ENCODE measurements at regions of chr20 and their contacts with region 1.

Region 1: DNA sequence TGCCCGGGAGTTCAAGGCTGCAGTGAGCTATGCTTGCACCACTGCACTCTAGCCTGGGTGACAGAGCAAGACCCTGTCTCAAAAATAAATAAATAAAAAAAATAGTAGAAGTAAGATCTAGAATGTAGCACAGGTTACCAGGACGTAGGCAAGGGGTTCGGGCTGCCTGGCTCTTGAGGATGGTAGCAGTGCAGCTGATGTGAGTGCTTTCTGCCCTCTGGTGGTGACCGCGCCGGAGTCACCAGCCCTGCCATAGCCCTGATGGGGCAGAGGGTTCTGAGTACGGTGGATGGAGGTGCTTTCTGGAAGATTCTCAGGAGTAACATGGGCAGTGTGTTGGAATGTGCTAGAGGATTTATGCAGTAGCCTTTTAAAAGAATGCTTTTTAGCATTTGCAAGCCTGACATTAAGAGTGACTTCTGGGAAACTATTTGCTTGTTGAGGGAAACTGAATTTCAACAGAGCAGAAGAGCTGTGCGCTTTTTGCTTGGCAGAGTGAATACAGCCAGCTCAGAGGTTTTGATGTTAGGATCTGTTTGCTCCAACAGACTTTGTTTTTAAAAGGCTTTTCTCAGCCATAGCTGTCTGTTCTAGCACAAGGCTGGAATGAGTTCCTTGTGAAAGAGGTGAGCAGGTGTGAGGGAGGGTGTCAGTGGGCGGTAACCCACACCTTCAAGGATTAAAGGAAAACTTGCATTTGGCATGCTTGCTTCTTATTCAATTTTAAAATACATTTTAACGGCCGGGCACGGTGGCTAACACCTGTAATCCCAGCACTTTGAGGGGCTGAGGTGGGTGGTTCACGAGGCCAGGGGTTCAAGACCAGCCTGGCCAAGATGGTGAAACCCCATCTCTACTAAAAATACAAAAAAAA is 65.9 kb downstream of the PTPN1 start:
- DNase-seq: no peak
- H3K4me3 ChIP-seq: no peak overlapping the region
- H3K27me3 ChIP-seq: no peaks in the 10 kb centered on the region
- CTCF ChIP-seq: peak; percentile 89

Region 2: DNA sequence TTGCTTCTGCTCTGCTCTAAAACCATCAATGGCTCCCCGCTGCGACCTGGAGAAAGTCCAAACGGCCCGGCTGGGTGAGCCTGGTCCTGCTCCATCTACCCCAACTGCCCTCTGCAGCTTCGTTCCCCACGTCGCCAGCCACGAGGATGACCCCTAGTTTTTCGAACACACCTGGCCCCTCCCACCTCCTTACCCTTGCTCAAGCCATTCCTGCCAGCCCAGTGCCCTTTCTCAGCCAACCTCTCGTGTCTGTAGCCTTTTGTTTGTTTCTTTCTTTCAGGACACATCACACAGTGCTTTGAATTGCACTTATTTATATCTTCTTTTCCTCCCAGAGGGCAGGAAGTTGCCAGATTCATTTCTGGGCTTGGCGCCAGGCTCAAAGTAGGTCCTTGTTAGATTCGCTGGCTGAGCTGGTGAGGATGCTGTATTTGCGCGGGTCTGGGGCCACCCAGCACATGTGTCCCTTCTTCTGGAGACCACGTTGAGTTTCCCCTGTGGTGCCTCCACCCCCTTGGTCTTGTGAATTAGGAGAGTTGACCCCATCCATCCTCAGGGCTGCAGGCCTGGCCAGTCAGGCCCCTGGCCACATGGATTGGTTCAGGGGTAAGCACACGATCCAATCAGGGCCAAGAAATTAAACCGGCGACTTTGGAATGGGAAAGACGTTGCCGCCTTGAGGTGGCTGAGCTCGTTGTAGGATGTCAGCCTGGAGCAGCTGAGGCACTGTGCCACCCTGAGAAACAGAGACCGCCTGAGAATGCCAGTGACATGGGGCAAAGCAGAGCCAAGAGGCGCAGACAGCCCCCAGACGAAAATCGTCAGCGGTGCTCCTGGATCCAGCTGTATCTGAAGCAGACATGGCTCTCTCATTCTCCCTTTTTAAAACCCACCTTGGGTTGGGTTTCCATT is 229.5 kb before region 1 on chr20:
- CTCF ChIA-PET with region 1: no interaction called
- POLR2A ChIA-PET with region 1: no interaction called
- DNase-seq: no peak
- H3K4me3 ChIP-seq: no peak overlapping the region
- H3K27me3 ChIP-seq: no peaks in the 10 kb centered on the region
- CTCF ChIP-seq: no peak

Region 3: GRCh38 chr20:50460460-50461267 is 115.4 kb before region 1 on chr20:
- CTCF ChIA-PET with region 1: interaction called, 83 read pairs
- POLR2A ChIA-PET with region 1: no interaction called
- DNase-seq: no peak
- H3K4me3 ChIP-seq: no peak overlapping the region
- H3K27me3 ChIP-seq: no peaks in the 10 kb centered on the region
- CTCF ChIP-seq: peak; percentile 95

Region 4: DNA sequence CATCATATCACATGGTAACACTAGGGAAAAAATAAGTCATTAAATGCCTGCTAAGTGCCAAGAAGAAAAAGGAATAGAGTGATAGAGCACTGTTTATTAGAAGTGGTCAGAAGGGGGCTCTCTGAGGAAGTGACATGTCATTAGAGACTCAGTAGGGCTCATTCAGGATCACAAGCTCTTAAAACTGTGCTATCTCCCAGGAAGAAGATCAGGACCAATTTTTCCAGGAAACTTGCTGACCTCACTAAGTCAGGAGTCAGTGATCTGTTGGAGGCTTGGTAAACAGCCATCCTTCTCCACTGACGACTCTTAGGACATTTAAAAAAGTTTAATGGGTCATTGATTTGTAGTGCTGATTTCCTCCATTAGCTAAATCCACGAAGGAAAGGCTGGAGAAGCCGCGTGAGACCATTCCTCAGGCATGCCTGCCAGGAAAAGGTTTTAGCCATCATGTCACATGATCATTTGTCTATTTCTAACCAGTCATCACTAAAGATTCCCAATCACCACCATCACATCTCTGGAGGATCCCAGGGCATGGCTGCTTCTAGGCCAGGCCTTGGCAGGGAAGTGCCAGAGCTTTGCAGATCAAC is 71.8 kb before region 1 on chr20:
- CTCF ChIA-PET with region 1: interaction called, 19 read pairs
- POLR2A ChIA-PET with region 1: no interaction called
- DNase-seq: no peak
- H3K4me3 ChIP-seq: no peak overlapping the region
- H3K27me3 ChIP-seq: no peaks in the 10 kb centered on the region
- CTCF ChIP-seq: no peak

Region 5: GRCh38 chr20:50563133-50563944 is 12.7 kb before region 1 on chr20:
- CTCF ChIA-PET with region 1: interaction called, 15 read pairs
- POLR2A ChIA-PET with region 1: no interaction called
- DNase-seq: no peak
- H3K4me3 ChIP-seq: no peak overlapping the region
- H3K27me3 ChIP-seq: no peaks in the 10 kb centered on the region
- CTCF ChIP-seq: no peak

Measured in BJ (cell line).